ENCODE measurements at regions of chr3 and their contacts with region 1.

Region 1: GRCh38 chr3:194333212-194333980 is 17.7 kb downstream of the CPN2 start:
- DNase-seq: peak; percentile 87 to 95 (median 95)
- ATAC-seq: peak; percentile 91 to 92
- H3K4me3 ChIP-seq: peak overlapping the region; percentile 44
- H3K27ac ChIP-seq: no peak overlapping the region
- H3K4me1 ChIP-seq: peaks cover 2% of the 10 kb centered on the region
- H3K27me3 ChIP-seq: no peaks in the 10 kb centered on the region

Region 2: GRCh38 chr3:194404365-194405140 is 71.2 kb after region 1 on chr3:
- intact Hi-C with region 1: loop called in 3 of 4 experiments (anchors 2 to 10 kb)
- DNase-seq: no peak
- ATAC-seq: no peak
- H3K4me3 ChIP-seq: no peak overlapping the region
- H3K27ac ChIP-seq: no peak overlapping the region
- H3K4me1 ChIP-seq: no peaks in the 10 kb centered on the region
- H3K27me3 ChIP-seq: no peaks in the 10 kb centered on the region

Region 3: GRCh38 chr3:194592798-194593752 is 259.7 kb after region 1 on chr3:
- intact Hi-C with region 1: loop called in 1 of 4 experiments (anchors 10 kb)
- DNase-seq: no peak
- ATAC-seq: peak in 1 of 2 donors; percentile 17
- H3K4me3 ChIP-seq: no peak overlapping the region
- H3K27ac ChIP-seq: no peak overlapping the region
- H3K4me1 ChIP-seq: no peaks in the 10 kb centered on the region
- H3K27me3 ChIP-seq: no peaks in the 10 kb centered on the region